Activated CD4-positive, alpha-beta memory T cell treated with anti-CD3 and anti-CD28 coated beads, Interleukin-2, amount 10 ng/mL, durations not matched to agents 7 days and 5 days (primary cell): ENCODE measurements at regions of chr13 and their contacts with region 1.

Region 1: GRCh38 chr13:50081679-50082425 is 66.6 kb downstream of the KCNRG start:
- DNase-seq: peak; percentile 99
- H3K4me3 Mint-ChIP-seq: peak overlapping the region; percentile 98
- H3K27ac Mint-ChIP-seq: peak overlapping the region; percentile 99
- H3K4me1 Mint-ChIP-seq: peaks cover 41% of the 10 kb centered on the region
- H3K27me3 Mint-ChIP-seq: no peaks in the 10 kb centered on the region

Region 2: GRCh38 chr13:49996951-49997895 is 84.6 kb before region 1 on chr13 and contains the start of gene TRIM13:
- CTCF ChIA-PET with region 1: interaction called, 65 read pairs
- POLR2A ChIA-PET with region 1: interaction called, 136 read pairs
- DNase-seq: peak; percentile 86
- H3K4me3 Mint-ChIP-seq: peak within 1 kb of the TSS; percentile 75
- H3K27ac Mint-ChIP-seq: peak within 1 kb of the TSS; percentile 85
- H3K4me1 Mint-ChIP-seq: peaks cover 37% of the 10 kb centered on the region
- H3K27me3 Mint-ChIP-seq: no peaks in the 10 kb centered on the region
- total RNA-seq, gene TRIM13: 13.2 to 17.4 TPM

Region 3: GRCh38 chr13:50055454-50055853 is 26.4 kb before region 1 on chr13:
- CTCF ChIA-PET with region 1: no interaction called
- POLR2A ChIA-PET with region 1: interaction called, 14 read pairs
- DNase-seq: no peak
- H3K4me3 Mint-ChIP-seq: no peak overlapping the region
- H3K27ac Mint-ChIP-seq: no peak overlapping the region
- H3K4me1 Mint-ChIP-seq: peaks cover 37% of the 10 kb centered on the region
- H3K27me3 Mint-ChIP-seq: no peaks in the 10 kb centered on the region

Region 4: GRCh38 chr13:50189450-50189849 is 107.6 kb after region 1 on chr13:
- CTCF ChIA-PET with region 1: no interaction called
- POLR2A ChIA-PET with region 1: no interaction called
- DNase-seq: no peak
- H3K4me3 Mint-ChIP-seq: no peak overlapping the region
- H3K27ac Mint-ChIP-seq: no peak overlapping the region
- H3K4me1 Mint-ChIP-seq: peaks cover 3% of the 10 kb centered on the region
- H3K27me3 Mint-ChIP-seq: peaks cover 31% of the 10 kb centered on the region

Region 5: GRCh38 chr13:50236898-50237318 is 155.1 kb after region 1 on chr13:
- CTCF ChIA-PET with region 1: interaction called, 7 read pairs
- POLR2A ChIA-PET with region 1: interaction called, 14 read pairs
- DNase-seq: peak; percentile 39
- H3K4me3 Mint-ChIP-seq: peak overlapping the region; percentile 5
- H3K27ac Mint-ChIP-seq: peak overlapping the region; percentile 53
- H3K4me1 Mint-ChIP-seq: peaks cover 26% of the 10 kb centered on the region
- H3K27me3 Mint-ChIP-seq: peaks cover 71% of the 10 kb centered on the region

Region 6: DNA sequence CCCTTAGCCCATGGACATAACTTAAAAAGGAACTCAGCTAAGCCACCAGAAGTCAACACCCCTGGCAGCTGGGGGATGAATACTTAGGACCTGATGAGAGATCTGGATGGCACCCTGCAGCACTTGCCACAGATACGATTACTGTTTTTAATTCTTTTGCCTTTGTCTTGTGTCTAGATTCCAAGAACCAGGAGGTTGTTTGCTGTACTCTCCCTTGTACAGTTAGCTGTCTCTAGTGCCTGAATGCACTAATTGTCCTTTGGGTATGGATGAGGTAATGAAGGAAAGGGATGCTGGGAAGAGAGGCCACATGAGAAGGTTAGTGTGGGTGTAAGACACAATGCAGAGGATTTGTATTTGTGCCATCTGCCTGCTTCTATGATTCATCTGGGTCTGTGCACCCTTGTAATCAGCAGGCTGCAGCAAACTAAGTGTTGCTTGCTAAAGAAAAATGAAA is 319.2 kb after region 1 on chr13:
- CTCF ChIA-PET with region 1: no interaction called
- POLR2A ChIA-PET with region 1: no interaction called
- DNase-seq: no peak
- H3K4me3 Mint-ChIP-seq: no peak overlapping the region
- H3K27ac Mint-ChIP-seq: no peak overlapping the region
- H3K4me1 Mint-ChIP-seq: no peaks in the 10 kb centered on the region
- H3K27me3 Mint-ChIP-seq: peaks cover 7% of the 10 kb centered on the region

Region 7: DNA sequence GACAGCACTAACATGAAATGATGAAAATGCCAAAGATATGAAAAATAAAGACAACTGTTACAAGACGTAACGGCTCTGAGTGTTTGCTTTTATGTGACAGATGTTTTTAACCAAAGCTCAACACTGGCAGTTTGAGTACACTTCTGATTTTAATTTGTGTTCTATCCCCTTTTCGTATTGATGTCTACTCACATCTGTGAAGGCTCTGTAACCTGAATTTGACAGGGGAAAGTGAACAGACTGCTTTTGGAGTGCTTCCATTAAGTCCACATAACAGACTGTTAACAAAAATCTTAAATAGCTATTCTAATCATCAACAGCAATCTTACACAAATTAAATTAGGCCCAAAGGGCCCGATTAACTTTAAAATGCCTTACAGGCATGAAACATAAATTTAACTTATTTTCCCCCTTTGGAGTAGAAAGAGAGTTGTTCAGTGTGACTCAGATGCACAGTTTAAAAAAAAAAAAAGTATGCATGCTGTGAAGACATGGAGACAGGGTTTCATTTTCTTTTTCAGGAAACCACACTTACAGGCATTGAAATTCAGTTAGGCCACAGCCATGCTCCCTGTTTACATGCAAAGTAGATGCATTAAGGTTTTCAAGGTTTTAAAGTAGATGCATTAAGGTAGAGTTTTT is 811.5 kb after region 1 on chr13:
- CTCF ChIA-PET with region 1: no interaction called
- POLR2A ChIA-PET with region 1: interaction called, 62 read pairs
- DNase-seq: peak; percentile 45
- H3K4me3 Mint-ChIP-seq: peak overlapping the region; percentile 69
- H3K27ac Mint-ChIP-seq: peak overlapping the region; percentile 96
- H3K4me1 Mint-ChIP-seq: peaks cover 47% of the 10 kb centered on the region
- H3K27me3 Mint-ChIP-seq: peaks cover 2% of the 10 kb centered on the region

Region 8: DNA sequence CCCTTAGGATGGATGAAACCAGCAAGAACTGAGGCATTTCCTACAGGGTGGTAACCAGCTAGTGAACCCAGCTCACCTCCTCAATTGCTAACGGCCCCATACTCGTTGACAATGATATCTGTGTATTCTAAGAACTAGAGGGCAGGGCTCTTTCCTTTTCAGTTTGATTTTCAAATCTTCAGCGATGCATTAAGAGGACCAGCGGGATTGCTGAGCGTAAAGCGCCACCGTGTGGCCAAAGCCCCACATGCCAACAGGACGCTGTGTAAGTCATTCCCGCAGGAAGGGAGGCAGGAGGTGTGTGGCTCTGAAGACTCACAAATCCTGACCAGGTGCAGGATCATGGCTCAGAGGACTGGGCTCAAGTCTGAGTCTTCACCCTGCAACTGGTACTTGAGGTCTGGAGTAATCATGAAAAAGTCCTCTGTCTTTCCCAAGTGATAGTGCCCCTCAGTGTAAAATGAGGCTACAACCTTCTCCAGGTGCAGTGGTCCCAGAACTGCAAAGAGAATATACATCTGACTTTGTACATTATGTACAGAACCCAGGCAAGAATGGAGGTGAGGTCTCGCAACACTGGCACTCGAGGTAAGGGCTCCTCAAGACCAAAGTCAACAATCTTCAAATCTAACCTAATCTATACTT is 988.3 kb after region 1 on chr13:
- CTCF ChIA-PET with region 1: interaction called, 18 read pairs
- POLR2A ChIA-PET with region 1: interaction called, 5 read pairs
- DNase-seq: peak; percentile 84
- H3K4me3 Mint-ChIP-seq: no peak overlapping the region
- H3K27ac Mint-ChIP-seq: peak overlapping the region; percentile 70
- H3K4me1 Mint-ChIP-seq: peaks cover 52% of the 10 kb centered on the region
- H3K27me3 Mint-ChIP-seq: peaks cover 16% of the 10 kb centered on the region